HepG2 (cell line): ENCODE measurements at regions of chr2 and their contacts with region 1.

Region 1: DNA sequence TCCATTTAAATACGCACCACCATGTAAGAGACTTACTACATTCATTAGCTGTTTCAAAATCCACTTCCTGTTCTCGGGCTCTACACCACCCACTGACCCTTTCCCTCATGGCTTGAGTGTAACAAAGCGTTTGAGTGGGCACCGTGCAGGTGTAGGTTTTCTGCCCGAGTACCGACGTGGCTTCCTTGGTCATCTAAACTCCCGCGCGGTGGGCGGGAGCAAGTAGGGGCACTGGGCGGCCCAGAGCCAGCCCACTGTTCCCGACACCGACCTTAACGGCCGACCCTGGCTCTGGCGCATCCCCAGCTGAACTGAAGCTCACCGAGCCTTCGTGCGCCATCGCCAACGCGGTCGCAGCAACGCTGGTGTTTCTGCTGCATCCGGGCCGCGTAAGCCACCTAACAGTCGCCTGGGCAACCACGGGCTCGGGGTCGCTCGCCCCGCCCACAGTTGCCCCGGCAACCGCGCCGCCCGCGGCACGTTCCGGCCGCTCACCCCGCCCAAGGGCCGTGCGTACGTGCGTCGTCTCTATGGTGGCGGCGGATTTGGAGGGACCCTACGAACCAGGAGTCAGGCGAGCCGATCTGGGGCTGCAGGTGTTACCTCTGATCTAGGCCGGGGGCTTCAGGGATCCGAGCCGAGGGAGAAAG is at the starts of genes C2orf81 and WDR54:
- DNase-seq: peak; percentile 75
- ATAC-seq: peak; percentile 78
- H3K4me3 ChIP-seq: peak within 1 kb of the TSS; percentile 50 to 75 (median 54)
- H3K27ac ChIP-seq: no peak within 1 kb of the TSS
- H3K4me1 ChIP-seq: peaks cover 54% of the 10 kb centered on the region
- H3K27me3 ChIP-seq: peaks cover 0 to 7% of the 10 kb centered on the region in 2 experiments; a peak in 2 of 5 replicates
- CTCF ChIP-seq: peak; percentile 14; the same call in 1 of the 2 replicates
- EP300 ChIP-seq: no peak
- POLR2A ChIP-seq: peak; percentile 37 to 41; a peak in 2 of 4 replicates
- RAD21 ChIP-seq: no peak; the same call in 1 of the 2 replicates
- total RNA-seq, gene C2orf81: 0.13 and 0.15 TPM in 2 replicates
- total RNA-seq, gene WDR54: 1.3 and 2.0 TPM in 2 replicates

Region 2: DNA sequence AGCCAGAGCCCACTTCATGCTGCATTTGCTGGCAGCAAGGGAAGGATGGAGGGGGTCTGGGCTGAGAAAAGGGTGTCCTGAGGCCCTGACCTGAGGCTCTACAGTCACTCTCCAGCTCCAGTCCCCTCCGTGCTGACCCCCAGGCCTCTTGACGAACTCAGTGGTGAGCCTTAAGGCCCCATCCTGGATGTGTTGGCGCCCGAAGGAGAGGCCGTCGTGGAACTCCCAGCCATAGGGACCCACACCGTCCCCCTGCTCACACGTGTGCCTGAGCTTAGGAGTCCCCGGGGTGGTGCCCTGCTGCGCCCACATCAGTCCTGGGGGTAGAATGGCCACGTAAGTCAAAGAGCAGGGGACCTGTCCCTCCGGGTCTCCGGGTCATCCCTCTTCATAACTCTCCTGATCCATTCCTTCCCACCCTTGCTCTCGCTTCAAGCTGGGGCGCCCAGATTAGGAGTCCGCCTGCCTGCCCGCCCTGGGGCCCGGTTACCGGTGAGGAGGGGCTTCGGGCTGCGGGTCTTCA is 43.1 kb after region 1 on chr2:
- CTCF ChIA-PET with region 1: no interaction called
- POLR2A ChIA-PET with region 1: interaction called, 24 read pairs
- in situ Hi-C with region 1: no loop called
- intact Hi-C with region 1: loop called (anchors 2 kb)
- DNase-seq: no peak
- ATAC-seq: peak; percentile 20
- H3K4me3 ChIP-seq: peak overlapping the region; percentile 74 to 92 (median 83)
- H3K27ac ChIP-seq: peak overlapping the region; percentile 89
- H3K4me1 ChIP-seq: peaks cover 36% of the 10 kb centered on the region
- H3K27me3 ChIP-seq: no peaks in the 10 kb centered on the region; a peak in 1 of 5 replicates
- CTCF ChIP-seq: no peak
- EP300 ChIP-seq: no peak
- POLR2A ChIP-seq: no peak
- RAD21 ChIP-seq: no peak